Adrenal gland (tissue), 19 donors: ENCODE measurements at regions of chr1 and their contacts with region 1.

Region 1: DNA sequence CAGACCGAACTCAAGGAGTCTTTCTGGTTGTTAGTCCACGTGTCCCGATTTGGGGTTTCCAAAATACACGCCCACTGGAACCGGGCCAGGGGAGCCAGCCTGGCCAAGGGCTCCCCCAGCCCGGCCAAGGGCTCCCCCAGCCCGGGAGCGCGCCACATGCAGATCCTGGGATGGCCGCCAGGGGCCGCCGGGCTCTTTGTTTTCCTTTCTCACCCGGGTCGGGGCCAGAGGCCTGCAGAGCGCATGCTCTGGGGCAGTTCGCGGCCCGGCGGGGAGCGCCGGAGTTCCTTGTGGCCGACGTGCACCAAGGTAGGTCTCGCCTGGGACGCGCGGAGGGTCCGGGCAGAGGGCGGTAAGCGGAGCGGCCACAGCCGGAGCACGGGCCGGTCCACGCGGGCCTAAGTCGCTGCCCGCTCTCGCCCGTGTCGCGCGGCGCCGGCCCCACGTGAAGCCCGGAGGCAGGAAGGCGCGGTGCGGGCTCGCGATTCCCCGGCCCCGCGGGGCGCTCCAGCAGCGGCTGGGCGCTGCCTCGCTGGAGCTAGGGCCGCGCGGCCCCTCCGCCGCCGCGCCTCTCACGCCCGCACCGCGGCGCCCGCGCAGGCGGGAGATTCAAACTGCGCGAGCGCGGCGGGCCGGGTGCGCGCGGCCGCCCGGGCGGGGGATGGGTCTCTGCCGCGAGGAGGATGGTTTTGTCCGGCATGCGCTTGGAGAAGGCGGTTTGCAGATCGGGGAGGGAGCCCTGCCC is 12.3 kb downstream of the RCC1 start:
- DNase-seq: peak; percentile 90 to 94 (median 91)
- H3K4me3 ChIP-seq: peak overlapping the region in 2 of 4 donors; percentile 33 to 82
- H3K27ac ChIP-seq: peak overlapping the region in 4 of 5 donors; percentile 57 to 92 (median 70)
- H3K4me1 ChIP-seq: peaks cover 6 to 14% of the 10 kb centered on the region in 2 donors
- H3K27me3 ChIP-seq: no peaks in the 10 kb centered on the region
- CTCF ChIP-seq: peak; percentile 95 to 99 (median 96)
- POLR2A ChIP-seq: peak; percentile 43 to 65

Region 2: DNA sequence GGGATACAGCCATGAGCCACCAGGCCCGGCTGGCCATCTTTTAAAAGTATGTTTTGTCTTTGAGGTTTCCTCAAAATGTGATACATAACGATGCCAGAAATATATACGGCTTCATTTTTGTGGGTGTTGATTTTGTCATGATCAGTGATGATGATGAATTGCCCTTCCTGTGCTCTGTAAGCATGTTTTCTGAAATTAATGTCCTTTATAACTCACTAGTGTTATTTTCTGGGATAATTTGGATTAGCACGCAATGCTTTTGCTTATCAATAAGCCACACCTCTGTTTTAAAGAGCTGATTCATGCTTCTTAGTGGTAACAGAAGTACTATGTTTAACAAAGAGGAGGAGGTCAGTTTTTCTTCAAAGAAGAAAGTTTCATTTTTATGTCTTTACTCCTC is 123.0 kb before region 1 on chr1:
- intact Hi-C with region 1: no loop called
- DNase-seq: no peak
- H3K4me3 ChIP-seq: no peak overlapping the region
- H3K27ac ChIP-seq: no peak overlapping the region
- H3K4me1 ChIP-seq: no peaks in the 10 kb centered on the region
- H3K27me3 ChIP-seq: no peaks in the 10 kb centered on the region
- CTCF ChIP-seq: no peak
- POLR2A ChIP-seq: no peak

Region 3: DNA sequence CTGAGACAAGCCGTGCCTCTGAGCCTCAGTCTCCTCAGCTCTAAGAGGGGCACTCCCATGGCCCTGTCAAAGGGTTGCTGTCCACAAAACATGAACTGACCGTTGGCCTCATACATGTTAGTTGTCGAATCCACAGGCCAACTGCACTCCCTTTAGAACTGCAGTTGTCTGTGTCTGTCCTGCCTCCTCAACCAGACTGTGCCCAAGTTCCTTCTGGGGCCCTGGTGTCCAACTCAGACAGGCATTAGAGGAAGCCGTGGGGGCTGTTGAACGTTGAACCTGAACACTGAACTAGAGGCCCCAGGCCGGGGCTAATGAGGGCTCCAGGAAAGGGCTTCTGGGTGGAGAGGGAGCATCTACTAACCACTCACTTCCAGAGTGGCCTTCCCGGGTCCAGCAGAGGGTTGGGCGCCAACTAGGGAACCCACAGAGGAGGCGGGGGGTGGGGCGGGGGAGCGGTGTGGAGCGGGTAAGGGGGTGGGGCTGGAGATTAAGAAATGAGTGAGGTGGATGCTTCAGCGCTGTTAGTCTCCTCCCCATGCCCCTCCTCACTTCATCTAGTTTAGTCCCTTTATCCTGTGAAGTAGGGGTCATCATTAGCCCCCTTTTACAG is 73.6 kb after region 1 on chr1 and contains the start of gene RAB42:
- intact Hi-C with region 1: loop called in 1 of 2 experiments (anchors 10 kb)
- DNase-seq: peak in 5 of 7 donors; percentile 39 to 59 (median 55)
- H3K4me3 ChIP-seq: peak within 1 kb of the TSS in 2 of 4 donors; percentile 19 to 77
- H3K27ac ChIP-seq: peak within 1 kb of the TSS in 2 of 5 donors; percentile 30 to 45
- H3K4me1 ChIP-seq: no peaks in the 10 kb centered on the region
- H3K27me3 ChIP-seq: no peaks in the 10 kb centered on the region
- CTCF ChIP-seq: no peak
- POLR2A ChIP-seq: no peak
- total RNA-seq, gene RAB42: 0.94 to 7.2 (median 3.9) TPM